PC-3 (cell line): ENCODE measurements at regions of chr3 and their contacts with region 1.

Region 1: GRCh38 chr3:16600780-16601539 is 4.3 kb downstream of the DAZL start:
- DNase-seq: peak; percentile 87
- ATAC-seq: peak; percentile 84
- H3K4me3 ChIP-seq: peak overlapping the region; percentile 26; the same call in 1 of the 2 replicates
- H3K27ac ChIP-seq: no peak overlapping the region
- H3K4me1 ChIP-seq: peaks cover 17% of the 10 kb centered on the region
- H3K27me3 ChIP-seq: no peaks in the 10 kb centered on the region
- CTCF ChIP-seq: peak; percentile 87

Region 2: GRCh38 chr3:16290007-16290826 is 310.7 kb before region 1 on chr3:
- CTCF ChIA-PET with region 1: no interaction called
- POLR2A ChIA-PET with region 1: no interaction called
- intact Hi-C with region 1: loop called (anchors 2 kb)
- DNase-seq: peak; percentile 73
- ATAC-seq: peak; percentile 80
- H3K4me3 ChIP-seq: no peak overlapping the region
- H3K27ac ChIP-seq: no peak overlapping the region
- H3K4me1 ChIP-seq: no peaks in the 10 kb centered on the region
- H3K27me3 ChIP-seq: no peaks in the 10 kb centered on the region
- CTCF ChIP-seq: peak; percentile 95

Region 3: GRCh38 chr3:16589867-16590624 is 10.9 kb before region 1 on chr3:
- CTCF ChIA-PET with region 1: no interaction called
- POLR2A ChIA-PET with region 1: no interaction called
- intact Hi-C with region 1: no loop called
- DNase-seq: no peak
- ATAC-seq: no peak
- H3K4me3 ChIP-seq: no peak overlapping the region
- H3K27ac ChIP-seq: no peak overlapping the region
- H3K4me1 ChIP-seq: no peaks in the 10 kb centered on the region
- H3K27me3 ChIP-seq: no peaks in the 10 kb centered on the region
- CTCF ChIP-seq: no peak

Region 4: GRCh38 chr3:16828815-16829214 is 227.9 kb after region 1 on chr3:
- CTCF ChIA-PET with region 1: interaction called, 3 read pairs
- POLR2A ChIA-PET with region 1: no interaction called
- intact Hi-C with region 1: loop called (anchors 1 kb)
- DNase-seq: peak; percentile 84
- ATAC-seq: peak; percentile 86
- H3K4me3 ChIP-seq: no peak overlapping the region
- H3K27ac ChIP-seq: peak overlapping the region; percentile 35
- H3K4me1 ChIP-seq: peaks cover 14% of the 10 kb centered on the region
- H3K27me3 ChIP-seq: no peaks in the 10 kb centered on the region
- CTCF ChIP-seq: peak; percentile 80

Region 5: GRCh38 chr3:16864610-16865313 is 263.8 kb after region 1 on chr3:
- CTCF ChIA-PET with region 1: no interaction called
- POLR2A ChIA-PET with region 1: no interaction called
- intact Hi-C with region 1: no loop called
- DNase-seq: peak; percentile 89
- ATAC-seq: peak; percentile 91
- H3K4me3 ChIP-seq: peak overlapping the region; percentile 27; the same call in 1 of the 2 replicates
- H3K27ac ChIP-seq: peak overlapping the region; percentile 59
- H3K4me1 ChIP-seq: peaks cover 24% of the 10 kb centered on the region
- H3K27me3 ChIP-seq: no peaks in the 10 kb centered on the region
- CTCF ChIP-seq: no peak

Region 6: DNA sequence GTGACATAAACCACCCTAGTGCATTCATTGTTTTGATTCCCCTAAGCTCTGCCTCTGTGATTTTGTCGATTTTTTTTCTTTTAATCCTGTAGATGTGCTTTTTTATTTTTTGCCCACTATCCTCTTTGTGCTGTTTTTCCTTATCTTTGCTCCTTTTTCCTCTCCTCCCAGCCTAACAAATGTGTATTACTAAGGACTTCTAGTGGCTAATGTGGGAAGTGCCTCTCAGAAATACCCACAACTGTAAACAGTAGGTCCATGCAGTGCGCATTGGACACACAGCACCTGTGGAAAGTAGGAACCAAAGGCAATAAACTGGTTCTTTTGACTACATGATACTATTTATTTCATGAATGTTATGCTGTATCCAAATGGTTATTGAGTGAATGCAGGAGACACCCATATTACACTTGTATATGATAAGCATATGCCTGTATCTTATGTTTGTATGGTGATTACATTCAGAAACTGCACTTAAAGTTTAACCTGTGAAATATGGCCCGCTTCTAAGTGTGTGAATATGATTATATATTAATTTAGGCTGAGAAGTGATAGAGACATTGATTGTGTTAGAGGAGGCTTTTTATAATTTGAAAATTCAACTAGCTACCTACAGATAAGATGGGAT is 431.6 kb after region 1 on chr3:
- CTCF ChIA-PET with region 1: no interaction called
- POLR2A ChIA-PET with region 1: no interaction called
- intact Hi-C with region 1: loop called (anchors 1 kb)
- DNase-seq: peak; percentile 70
- ATAC-seq: peak; percentile 84
- H3K4me3 ChIP-seq: no peak overlapping the region
- H3K27ac ChIP-seq: no peak overlapping the region
- H3K4me1 ChIP-seq: peaks cover 15% of the 10 kb centered on the region
- H3K27me3 ChIP-seq: no peaks in the 10 kb centered on the region
- CTCF ChIP-seq: peak; percentile 95

Region 7: DNA sequence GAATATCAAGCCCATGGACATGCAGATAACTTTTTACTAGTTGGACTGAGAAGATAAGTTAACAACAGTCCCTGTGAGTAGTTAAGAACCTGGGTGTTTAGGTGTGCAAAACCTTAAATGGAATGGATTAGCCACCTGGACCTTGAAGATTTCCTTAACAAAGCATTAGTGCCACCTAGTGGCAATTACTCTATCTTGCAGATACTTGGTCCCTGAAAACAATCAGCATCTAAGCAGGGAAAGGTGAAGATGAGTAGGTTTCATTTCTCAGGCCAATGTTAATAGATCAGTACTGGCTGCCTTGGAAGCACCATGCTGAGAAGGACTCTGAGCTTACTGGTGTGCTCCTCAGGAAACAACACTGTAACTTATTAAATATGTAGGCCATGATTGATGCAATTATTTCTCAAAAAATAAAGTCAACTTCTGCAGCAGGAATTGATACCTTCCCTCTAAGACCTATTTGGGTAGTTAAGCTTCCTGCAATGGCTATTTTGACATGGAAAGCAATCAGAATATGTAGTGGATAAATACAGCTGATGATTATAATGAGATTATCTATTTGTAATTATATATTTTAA is 812.1 kb after region 1 on chr3:
- CTCF ChIA-PET with region 1: no interaction called
- POLR2A ChIA-PET with region 1: no interaction called
- intact Hi-C with region 1: loop called (anchors 1 kb)
- DNase-seq: peak; percentile 82
- ATAC-seq: peak; percentile 92
- H3K4me3 ChIP-seq: no peak overlapping the region
- H3K27ac ChIP-seq: no peak overlapping the region
- H3K4me1 ChIP-seq: 0 out of 2 replicates have a peak, but pooled peaks cover 6% of the 10 kb centered on the region
- H3K27me3 ChIP-seq: no peaks in the 10 kb centered on the region
- CTCF ChIP-seq: peak; percentile 94